Mammary epithelial cell (primary cell): ENCODE measurements at regions of chrX and their contacts with region 1.

Region 1: DNA sequence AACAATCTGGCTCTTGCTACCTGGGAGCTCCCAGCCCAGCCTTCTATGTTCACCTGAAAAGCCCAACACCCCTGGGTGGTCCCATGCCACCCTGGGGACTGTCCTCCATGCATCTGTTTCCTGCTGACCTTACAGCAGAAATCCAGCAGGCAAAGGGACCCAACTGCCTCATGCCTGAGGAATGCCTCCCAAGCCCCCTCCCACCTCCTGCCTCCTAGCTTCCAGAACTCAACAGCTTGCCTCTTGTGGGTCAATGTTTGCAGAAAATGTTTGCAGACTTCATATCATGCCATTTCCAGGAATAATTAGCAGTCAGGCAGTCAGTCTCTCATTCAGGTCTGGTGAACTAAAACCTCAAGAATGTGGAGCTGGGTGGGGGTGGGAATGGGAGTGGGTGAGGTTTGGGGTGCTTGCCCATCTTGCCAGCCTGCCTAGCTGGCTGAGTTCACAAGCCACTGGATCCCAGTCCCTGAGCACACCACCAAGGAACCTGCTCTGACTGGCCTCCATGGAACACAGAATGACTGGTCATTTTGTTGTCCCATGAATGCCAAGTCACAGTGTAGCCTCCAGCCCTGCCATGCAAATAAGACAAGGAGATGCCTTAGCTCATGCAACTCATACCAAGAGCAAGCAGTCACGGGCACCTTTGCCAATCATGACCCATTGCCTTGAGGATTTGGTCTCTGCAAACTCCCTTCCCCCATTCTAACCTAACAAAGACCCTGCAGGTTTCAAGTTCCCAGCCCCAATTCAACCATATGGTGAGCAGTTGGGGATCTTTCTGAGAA is 12.1 kb upstream of the PLAC1 start:
- DNase-seq: peak; percentile 80
- H3K4me3 ChIP-seq: no peak overlapping the region
- H3K27ac ChIP-seq: peak overlapping the region; percentile 52
- H3K4me1 ChIP-seq: peaks cover 22% of the 10 kb centered on the region
- H3K27me3 ChIP-seq: no peaks in the 10 kb centered on the region
- CTCF ChIP-seq: no peak

Region 2: GRCh38 chrX:133495464-133496391 is 1174.6 kb before region 1 on chrX:
- CTCF ChIA-PET with region 1: no interaction called
- dilution Hi-C with region 1: no loop called
- in situ Hi-C with region 1: no loop called
- intact Hi-C with region 1: no loop called
- DNase-seq: no peak
- H3K4me3 ChIP-seq: no peak overlapping the region
- H3K27ac ChIP-seq: no peak overlapping the region
- H3K4me1 ChIP-seq: no peaks in the 10 kb centered on the region
- H3K27me3 ChIP-seq: peaks cover 2% of the 10 kb centered on the region
- CTCF ChIP-seq: no peak

Region 3: DNA sequence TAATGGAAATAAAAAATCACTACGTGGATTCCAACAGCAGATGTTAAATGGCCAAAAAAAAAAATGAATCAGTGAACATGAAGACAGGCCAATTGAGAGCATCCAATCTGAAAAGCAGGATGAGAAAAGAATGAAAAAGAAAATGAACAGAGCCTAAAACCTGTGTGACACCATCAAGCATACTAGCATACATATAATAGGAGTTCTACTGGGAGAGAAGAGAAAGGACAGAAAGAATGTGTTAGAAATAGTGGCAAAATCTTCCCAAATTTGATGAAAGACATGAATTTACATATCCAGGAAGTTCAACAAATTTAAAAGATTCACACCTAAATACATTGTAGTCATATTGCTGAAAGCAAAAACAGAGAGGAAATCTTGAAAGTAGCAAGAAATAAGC is 356.9 kb before region 1 on chrX:
- CTCF ChIA-PET with region 1: no interaction called
- dilution Hi-C with region 1: no loop called
- in situ Hi-C with region 1: no loop called
- intact Hi-C with region 1: no loop called
- DNase-seq: no peak
- H3K4me3 ChIP-seq: no peak overlapping the region
- H3K27ac ChIP-seq: no peak overlapping the region
- H3K4me1 ChIP-seq: no peaks in the 10 kb centered on the region
- H3K27me3 ChIP-seq: no peaks in the 10 kb centered on the region
- CTCF ChIP-seq: no peak

Region 4: DNA sequence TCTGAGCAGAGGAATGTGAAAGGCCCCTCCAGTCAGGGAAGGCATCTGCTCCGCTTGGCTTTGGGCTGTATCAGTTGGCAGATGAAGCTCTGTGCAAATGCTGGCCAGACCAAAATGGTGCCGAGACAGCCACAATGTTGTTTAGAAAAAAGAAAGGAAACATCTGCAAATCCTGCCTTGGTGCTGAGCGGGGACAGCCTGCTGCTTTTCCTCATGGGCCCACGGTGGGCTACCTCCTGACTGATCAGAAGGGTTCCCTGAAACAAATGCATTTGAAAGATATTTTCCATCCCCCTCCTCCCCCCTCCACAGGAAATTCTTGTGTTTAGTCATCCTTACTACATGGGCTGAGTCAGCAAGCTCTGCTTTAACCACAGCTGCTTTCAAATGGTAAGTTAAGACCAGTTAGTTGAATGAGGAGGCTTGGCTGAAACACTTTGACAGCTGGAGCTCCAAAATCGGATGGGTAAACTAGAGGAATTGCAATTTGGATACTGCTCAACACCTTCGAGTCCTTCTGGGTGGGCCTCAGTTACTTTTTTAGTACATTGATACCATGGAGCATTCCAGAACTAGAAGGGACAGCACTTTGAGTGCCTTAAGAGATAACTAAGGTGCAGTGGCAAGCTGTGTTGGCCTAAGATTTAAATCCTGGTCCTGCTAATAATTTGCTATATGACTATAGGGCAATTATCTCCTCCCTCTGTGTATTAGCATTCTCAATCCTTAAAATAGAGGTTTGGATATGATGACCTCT is 48.1 kb before region 1 on chrX:
- CTCF ChIA-PET with region 1: no interaction called
- dilution Hi-C with region 1: loop called (anchors 5 kb)
- in situ Hi-C with region 1: no loop called
- intact Hi-C with region 1: loop called (anchors 1 kb)
- DNase-seq: peak; percentile 77
- H3K4me3 ChIP-seq: no peak overlapping the region
- H3K27ac ChIP-seq: peak overlapping the region; percentile 58
- H3K4me1 ChIP-seq: peaks cover 25% of the 10 kb centered on the region
- H3K27me3 ChIP-seq: no peaks in the 10 kb centered on the region
- CTCF ChIP-seq: no peak

Region 5: GRCh38 chrX:134774190-134775048 is 104.1 kb after region 1 on chrX:
- CTCF ChIA-PET with region 1: no interaction called
- dilution Hi-C with region 1: loop called (anchors 5 kb)
- in situ Hi-C with region 1: no loop called
- intact Hi-C with region 1: no loop called
- DNase-seq: no peak
- H3K4me3 ChIP-seq: no peak overlapping the region
- H3K27ac ChIP-seq: no peak overlapping the region
- H3K4me1 ChIP-seq: no peaks in the 10 kb centered on the region
- H3K27me3 ChIP-seq: no peaks in the 10 kb centered on the region
- CTCF ChIP-seq: no peak